ENCODE measurements at regions of chr2 and their contacts with region 1.

Region 1: DNA sequence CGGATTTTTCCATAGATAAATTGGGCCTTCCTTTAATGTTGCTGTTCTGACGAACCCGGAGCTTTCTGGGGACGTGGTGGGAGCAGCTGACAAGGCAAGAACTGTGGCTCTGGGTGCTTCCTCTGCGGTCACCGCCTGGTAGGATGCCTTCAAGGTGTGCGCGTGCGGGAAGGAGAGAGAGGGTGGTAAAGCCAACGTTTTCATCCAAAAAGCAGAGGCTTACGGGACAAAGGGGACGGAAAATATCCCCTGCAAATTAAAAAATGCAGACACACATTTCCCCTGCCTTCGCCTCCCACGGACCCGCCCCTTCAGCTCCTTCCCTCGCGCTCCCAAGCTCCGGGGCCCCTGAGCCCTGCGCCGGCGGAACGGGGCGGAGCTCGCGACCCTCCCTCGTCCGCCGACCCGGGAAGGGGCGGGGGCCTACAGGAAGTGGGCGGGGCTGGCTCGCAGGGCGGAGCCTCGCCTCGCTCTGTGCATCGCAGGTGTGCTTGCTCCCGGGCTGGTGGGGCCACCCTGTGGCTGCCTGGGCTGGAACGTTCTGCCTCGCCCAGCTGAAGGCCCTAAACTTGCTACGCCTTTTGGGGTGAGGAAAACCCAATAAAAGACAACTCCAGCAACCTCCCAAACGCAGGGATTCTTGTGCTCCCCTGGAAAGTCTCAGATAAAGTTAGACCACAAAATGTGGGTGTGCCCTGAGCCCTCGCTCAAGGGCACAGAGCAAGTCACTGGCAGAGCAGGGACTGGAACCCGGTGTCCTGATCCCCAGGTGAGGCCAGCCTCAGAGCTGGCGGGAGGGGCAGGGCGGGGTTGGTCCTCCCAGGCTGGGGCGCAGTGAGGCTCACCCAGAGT is 25.4 kb upstream of the SLC66A3 start:
- DNase-seq: peak; percentile 71
- ATAC-seq: peak; percentile 88
- H3K4me3 Mint-ChIP-seq: peak overlapping the region; percentile 78
- H3K27ac Mint-ChIP-seq: no peak overlapping the region
- H3K4me1 Mint-ChIP-seq: peaks cover 34% of the 10 kb centered on the region
- H3K27me3 Mint-ChIP-seq: peaks cover 5% of the 10 kb centered on the region
- CTCF ChIP-seq: no peak

Region 2: DNA sequence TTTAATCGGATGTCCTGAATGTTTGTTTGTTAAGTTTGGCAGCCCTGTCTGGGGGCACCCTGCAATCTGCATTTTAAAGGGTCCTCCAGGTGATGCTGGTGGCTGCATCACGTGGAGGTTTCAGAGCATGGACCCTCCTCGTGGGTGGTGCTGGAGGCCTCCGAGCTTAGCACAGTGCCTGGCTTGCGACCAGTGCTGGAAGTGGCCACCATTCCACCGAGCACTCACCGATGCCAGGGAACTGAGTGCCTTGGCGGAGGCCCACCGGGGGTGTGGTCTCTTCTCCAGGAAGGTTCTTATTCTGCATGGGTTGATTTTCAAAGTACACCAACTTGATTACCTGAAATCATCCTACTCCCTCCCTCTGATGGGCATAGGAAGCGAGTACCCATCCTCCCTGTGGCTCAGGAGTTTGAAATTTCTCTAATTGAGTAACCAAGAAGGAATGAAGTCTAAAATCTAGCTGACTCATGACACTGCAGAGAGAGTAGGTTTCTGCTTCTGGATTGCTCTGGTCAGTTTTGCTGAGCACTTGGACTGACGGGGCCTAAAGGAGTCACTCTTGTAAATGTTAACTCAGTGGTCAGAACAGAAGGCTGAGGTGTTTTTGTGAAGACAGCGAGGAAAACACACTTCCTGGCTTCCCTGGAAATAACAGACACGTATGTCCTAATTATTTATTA is 32.6 kb before region 1 on chr2:
- CTCF ChIA-PET with region 1: no interaction called
- POLR2A ChIA-PET with region 1: no interaction called
- intact Hi-C with region 1: no loop called
- DNase-seq: no peak
- ATAC-seq: no peak
- H3K4me3 Mint-ChIP-seq: no peak overlapping the region
- H3K27ac Mint-ChIP-seq: no peak overlapping the region
- H3K4me1 Mint-ChIP-seq: no peaks in the 10 kb centered on the region
- H3K27me3 Mint-ChIP-seq: peaks cover 13% of the 10 kb centered on the region
- CTCF ChIP-seq: no peak

Region 3: DNA sequence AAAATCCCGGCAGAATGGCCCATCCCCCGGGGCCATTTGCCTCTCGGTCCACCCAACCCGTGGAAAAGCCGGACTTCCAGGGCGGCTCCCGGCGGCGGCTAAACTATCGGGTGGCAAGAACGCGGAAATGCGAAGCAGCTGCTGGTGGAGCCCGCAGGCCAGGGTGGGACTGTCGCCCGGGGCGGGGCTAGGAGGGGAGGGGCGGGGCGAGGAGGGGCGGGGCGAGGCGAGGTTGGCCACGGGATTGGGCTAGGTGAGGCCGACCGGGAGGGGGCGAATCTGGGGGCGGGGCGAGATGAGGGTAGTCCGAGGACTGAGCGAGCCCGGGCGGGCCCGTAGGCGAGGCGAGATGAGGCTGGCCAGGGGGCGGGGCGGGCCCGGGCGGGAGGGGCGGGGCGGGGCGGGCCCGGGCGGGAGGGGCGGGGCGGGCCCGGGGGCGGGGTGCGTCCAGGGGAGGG is 25.1 kb after region 1 on chr2:
- CTCF ChIA-PET with region 1: interaction called, 9 read pairs
- POLR2A ChIA-PET with region 1: interaction called, 37 read pairs
- intact Hi-C with region 1: loop called (anchors 1 kb)
- DNase-seq: peak; percentile 91
- ATAC-seq: peak; percentile 92
- H3K4me3 Mint-ChIP-seq: peak overlapping the region; percentile 85
- H3K27ac Mint-ChIP-seq: peak overlapping the region; percentile 84
- H3K4me1 Mint-ChIP-seq: peaks cover 20% of the 10 kb centered on the region
- H3K27me3 Mint-ChIP-seq: no peaks in the 10 kb centered on the region
- CTCF ChIP-seq: no peak

Region 4: DNA sequence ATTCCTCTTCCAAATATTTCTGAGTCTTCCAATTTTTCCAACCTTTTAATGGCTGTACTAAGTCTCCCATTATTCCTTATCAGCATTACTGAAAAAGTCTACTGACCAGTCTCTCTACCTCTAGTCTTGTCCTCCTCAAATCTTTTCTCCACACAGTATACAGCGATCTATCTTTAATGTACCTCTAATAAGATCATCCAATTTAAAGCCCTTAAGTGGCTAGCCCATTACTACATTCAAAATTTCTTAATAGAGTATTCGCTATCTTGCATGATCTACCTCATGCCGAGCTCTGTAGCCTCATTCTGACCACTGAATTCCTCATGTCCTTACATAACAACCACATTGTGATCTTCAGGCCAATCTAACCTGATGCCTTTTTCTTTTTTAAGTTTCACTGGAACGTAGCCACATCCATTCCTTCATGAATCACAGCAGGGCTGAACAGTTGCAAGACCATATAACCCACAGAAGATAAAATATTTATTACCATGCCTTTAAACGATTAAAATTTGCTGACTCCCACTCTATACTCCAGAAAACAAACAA is 83.3 kb after region 1 on chr2:
- CTCF ChIA-PET with region 1: interaction called, 5 read pairs
- POLR2A ChIA-PET with region 1: no interaction called
- intact Hi-C with region 1: loop called (anchors 5 kb)
- DNase-seq: no peak
- ATAC-seq: no peak
- H3K4me3 Mint-ChIP-seq: no peak overlapping the region
- H3K27ac Mint-ChIP-seq: no peak overlapping the region
- H3K4me1 Mint-ChIP-seq: no peaks in the 10 kb centered on the region
- H3K27me3 Mint-ChIP-seq: no peaks in the 10 kb centered on the region
- CTCF ChIP-seq: no peak

Region 5: DNA sequence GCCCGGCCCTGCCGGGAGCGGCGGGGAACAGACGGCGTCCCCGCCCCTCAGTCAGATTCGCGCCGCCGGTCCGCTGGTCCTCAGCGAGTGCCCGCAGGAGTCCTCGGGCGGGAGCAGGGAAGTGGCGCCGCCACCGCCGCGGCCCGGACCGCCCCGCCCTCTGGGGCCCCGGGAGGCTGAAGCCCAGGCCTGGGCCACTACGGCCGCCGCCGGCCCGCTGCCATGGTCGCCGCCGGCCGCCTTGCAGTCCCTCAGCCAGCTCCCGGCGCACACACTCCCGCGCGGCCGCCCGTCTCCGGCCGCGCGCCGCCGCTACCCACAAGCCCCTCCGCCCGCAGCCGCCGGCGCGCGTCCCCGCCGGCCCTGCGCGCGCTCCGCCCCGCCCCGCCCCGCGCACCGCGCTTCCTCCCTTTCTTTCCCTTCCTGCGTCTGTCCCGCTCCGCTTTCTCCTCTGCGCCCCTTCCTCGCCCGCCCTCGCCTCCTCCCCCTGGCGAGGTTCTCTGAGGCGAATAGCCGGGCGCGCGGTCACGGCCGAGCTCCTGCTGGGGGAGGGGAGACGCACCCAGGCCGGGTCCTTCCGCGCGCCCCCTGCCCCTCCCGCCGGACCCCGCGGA is 214.6 kb after region 1 on chr2 and contains the start of gene ROCK2:
- CTCF ChIA-PET with region 1: interaction called, 4 read pairs
- POLR2A ChIA-PET with region 1: interaction called, 10 read pairs
- intact Hi-C with region 1: loop called (anchors 2 kb)
- DNase-seq: peak; percentile 73
- ATAC-seq: peak; percentile 67
- H3K4me3 Mint-ChIP-seq: peak within 1 kb of the TSS; percentile 99
- H3K27ac Mint-ChIP-seq: peak within 1 kb of the TSS; percentile 86
- H3K4me1 Mint-ChIP-seq: peaks cover 29% of the 10 kb centered on the region
- H3K27me3 Mint-ChIP-seq: no peaks in the 10 kb centered on the region
- CTCF ChIP-seq: no peak
- total RNA-seq, gene ROCK2: 18.5 and 18.8 TPM in 2 replicates

Region 6: GRCh38 chr2:11398747-11399437 is 269.1 kb after region 1 on chr2:
- CTCF ChIA-PET with region 1: no interaction called
- POLR2A ChIA-PET with region 1: no interaction called
- intact Hi-C with region 1: no loop called
- DNase-seq: no peak
- ATAC-seq: no peak
- H3K4me3 Mint-ChIP-seq: no peak overlapping the region
- H3K27ac Mint-ChIP-seq: no peak overlapping the region
- H3K4me1 Mint-ChIP-seq: no peaks in the 10 kb centered on the region
- H3K27me3 Mint-ChIP-seq: peaks cover 10% of the 10 kb centered on the region
- CTCF ChIP-seq: no peak

Region 7: GRCh38 chr2:11446733-11447248 is 317.0 kb after region 1 on chr2:
- CTCF ChIA-PET with region 1: interaction called, 32 read pairs
- POLR2A ChIA-PET with region 1: no interaction called
- intact Hi-C with region 1: no loop called
- DNase-seq: peak; percentile 19
- ATAC-seq: peak; percentile 65
- H3K4me3 Mint-ChIP-seq: no peak overlapping the region
- H3K27ac Mint-ChIP-seq: no peak overlapping the region
- H3K4me1 Mint-ChIP-seq: no peaks in the 10 kb centered on the region
- H3K27me3 Mint-ChIP-seq: no peaks in the 10 kb centered on the region
- CTCF ChIP-seq: peak; percentile 18

Region 8: DNA sequence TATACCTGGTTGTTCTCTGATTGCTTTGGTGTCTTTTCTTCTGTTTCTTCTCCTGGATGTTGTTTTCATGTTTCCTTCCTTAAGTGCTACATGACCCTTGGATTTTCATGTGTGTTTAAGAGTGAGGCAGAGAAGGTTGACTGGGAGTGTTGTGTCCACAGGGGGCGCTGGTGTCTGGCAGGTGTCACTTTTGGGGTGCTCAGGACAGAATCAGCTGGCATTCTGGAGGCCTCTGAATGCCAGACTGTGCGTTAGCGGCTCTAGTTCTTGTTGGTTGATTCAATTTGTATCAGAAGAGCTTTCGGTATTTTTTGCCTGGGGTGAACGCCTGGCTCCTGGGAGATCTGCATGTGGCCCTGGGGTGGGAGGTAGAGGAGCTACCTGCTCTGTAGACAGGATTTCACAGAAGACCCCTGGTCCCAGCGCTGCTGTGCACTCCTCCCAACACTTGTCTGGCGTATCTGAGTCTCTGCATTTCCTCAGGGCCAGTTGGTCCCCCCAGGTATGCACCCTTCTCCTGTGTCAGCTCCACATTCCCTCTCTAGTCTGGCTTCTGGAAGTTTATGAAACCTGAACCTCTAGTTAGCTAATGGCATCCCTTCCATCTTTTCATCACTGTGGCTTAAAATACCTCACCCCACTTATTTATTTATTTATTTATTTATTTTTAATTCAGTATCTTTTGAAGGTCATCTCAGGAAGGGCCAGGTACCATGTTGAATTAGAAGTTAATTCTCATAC is 405.1 kb after region 1 on chr2:
- CTCF ChIA-PET with region 1: no interaction called
- POLR2A ChIA-PET with region 1: no interaction called
- intact Hi-C with region 1: no loop called
- DNase-seq: no peak
- ATAC-seq: no peak
- H3K4me3 Mint-ChIP-seq: no peak overlapping the region
- H3K27ac Mint-ChIP-seq: no peak overlapping the region
- H3K4me1 Mint-ChIP-seq: no peaks in the 10 kb centered on the region
- H3K27me3 Mint-ChIP-seq: peaks cover 17% of the 10 kb centered on the region
- CTCF ChIP-seq: no peak

Region 9: GRCh38 chr2:11583840-11584524 is 454.2 kb after region 1 on chr2:
- CTCF ChIA-PET with region 1: interaction called, 32 read pairs
- POLR2A ChIA-PET with region 1: no interaction called
- intact Hi-C with region 1: loop called (anchors 1 kb)
- DNase-seq: no peak
- ATAC-seq: peak; percentile 89
- H3K4me3 Mint-ChIP-seq: no peak overlapping the region
- H3K27ac Mint-ChIP-seq: no peak overlapping the region
- H3K4me1 Mint-ChIP-seq: no peaks in the 10 kb centered on the region
- H3K27me3 Mint-ChIP-seq: peaks cover 8% of the 10 kb centered on the region
- CTCF ChIP-seq: no peak

Region 10: DNA sequence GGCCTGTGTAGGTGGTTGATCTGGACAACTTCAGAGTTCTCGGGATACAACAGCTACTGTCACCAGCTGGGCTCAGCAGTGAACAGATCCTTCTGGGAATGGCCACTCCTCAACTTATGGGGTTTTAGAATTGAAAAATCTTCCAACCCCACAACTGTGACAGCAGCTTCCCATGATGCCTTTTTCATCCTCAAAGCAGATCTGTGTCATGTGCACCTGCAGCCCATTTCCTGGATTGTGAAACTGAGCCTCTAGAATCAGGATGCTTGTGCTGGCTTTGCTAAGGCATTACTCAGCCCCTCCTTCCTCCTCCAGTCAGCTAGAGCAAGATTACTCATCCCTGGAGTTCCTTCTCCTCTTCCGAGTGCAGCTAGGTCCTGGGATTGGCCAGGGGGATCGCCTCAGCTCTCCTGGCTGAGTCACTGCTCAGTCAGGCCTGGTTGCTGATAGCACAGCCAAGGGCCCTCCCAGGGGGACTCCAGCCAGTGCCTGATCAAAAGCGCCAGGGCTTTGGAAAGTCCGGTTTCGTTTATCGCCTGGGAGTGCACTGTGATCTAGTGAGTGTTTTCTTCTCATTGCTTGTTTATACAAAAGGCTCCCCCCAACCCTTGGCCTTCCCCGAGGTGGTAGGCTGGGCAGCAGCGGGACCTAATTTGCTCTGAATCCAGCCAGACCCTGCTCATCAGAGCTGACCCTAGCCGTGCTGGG is 614.2 kb after region 1 on chr2:
- CTCF ChIA-PET with region 1: no interaction called
- POLR2A ChIA-PET with region 1: no interaction called
- intact Hi-C with region 1: loop called (anchors 2 kb)
- DNase-seq: peak; percentile 62
- ATAC-seq: peak; percentile 60
- H3K4me3 Mint-ChIP-seq: peak overlapping the region; percentile 71
- H3K27ac Mint-ChIP-seq: peak overlapping the region; percentile 82
- H3K4me1 Mint-ChIP-seq: peaks cover 54% of the 10 kb centered on the region
- H3K27me3 Mint-ChIP-seq: no peaks in the 10 kb centered on the region
- CTCF ChIP-seq: no peak

Measured in activated B cell treated with CpG ODN at 0.5 μM for 24 hours (primary cell).